ENCODE measurements at regions of chr17 and their contacts with region 1.

Region 1: DNA sequence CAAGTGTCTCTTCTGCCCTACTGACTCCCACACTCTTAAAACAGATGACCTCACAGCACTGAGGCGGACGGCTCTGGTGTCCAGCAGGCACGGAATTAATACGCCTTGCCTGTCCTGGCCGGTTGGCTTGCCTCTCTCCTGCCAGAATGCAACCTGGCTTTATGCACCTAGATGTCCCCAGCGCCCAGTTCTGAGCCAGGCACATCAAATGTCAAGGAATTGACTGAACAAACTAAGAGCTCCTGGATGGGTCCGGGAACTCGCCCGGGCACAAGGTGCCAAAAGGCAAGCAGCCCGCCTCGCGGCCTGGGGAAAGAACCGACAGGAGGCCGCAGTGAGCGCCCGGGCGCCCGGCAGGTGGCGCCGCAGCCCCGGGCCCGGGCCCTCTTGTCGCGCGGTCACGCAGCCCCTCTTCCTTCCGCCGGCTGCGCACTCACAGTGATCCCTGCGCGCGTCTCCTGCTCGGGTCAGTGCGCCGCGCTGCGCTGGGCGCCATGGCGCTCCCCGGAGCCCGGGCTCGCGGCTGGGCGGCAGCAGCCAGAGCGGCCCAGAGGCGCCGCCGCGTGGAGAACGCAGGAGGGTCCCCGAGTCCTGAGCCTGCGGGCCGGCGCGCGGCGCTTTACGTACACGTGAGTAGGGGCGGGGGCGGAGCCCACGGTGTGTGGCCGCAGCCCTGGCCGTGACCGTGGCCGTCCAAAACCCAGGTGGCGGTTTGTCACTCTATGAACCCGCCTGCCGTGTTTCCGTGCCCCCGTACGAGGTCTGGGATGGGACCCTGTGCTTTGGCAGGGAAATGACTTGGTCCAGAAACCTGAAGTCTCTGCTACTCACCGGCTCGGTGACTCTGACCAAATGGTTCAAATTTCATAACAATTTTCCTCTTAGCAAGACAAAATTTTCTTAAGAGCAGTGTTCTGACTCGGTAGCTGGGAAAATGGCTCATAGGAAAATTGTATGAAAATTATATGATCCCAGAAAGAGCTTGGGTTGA is at the start of gene RSAD1:
- DNase-seq: peak; percentile 95
- ATAC-seq: peak; percentile 93
- total RNA-seq, gene RSAD1: 52.7 TPM

Region 2: GRCh38 chr17:50361561-50362480 is 116.9 kb before region 1 on chr17:
- intact Hi-C with region 1: loop called (anchors 5 kb)
- DNase-seq: no peak
- ATAC-seq: peak; percentile 62

Region 3: GRCh38 chr17:50425682-50426471 is 52.8 kb before region 1 on chr17 and contains the start of gene ACSF2:
- intact Hi-C with region 1: loop called (anchors 2 kb)
- DNase-seq: peak; percentile 88
- ATAC-seq: peak; percentile 93
- total RNA-seq, gene ACSF2: 22.7 TPM

Region 4: DNA sequence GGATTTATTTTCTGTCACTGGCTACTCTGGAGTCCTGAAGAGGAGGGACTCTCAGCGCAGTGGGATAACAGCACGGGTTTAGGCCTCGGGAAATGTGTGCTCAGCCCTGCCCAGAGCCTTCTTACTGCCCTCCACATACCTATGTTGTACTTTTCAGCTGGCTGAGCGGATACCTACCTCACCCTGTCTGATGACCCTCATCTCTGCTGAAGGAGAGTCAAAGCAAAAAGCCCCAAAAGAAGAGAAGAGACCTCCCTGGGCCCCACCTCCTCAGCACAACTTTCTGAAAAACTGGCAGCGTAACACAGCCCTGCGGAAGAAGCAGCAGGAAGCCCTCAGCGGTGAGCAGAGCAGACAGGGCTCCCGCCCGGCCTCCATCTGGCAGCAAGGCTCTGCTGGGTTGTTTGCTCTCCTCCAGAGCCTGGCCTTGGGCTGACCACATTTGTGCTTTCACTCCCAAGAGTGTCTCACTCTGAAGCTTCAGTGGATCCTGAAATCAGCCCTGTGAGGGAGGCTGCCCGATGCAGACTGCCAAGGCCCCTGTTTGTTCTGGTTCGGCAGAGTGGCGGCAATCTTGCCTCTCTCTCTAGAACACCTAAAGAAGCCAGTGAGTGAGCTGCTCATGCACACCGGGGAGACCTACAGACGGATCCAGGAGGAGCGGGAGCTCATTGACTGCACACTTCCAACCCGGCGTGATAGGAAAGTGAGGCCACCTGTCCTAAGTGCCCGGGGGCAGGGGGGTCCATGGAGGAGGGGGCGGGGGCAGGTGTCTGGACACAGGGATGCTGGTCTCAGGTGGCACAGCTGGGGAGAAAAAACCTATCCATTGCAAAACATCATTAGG is 39.9 kb after region 1 on chr17:
- intact Hi-C with region 1: no loop called
- DNase-seq: no peak
- ATAC-seq: no peak

Region 5: DNA sequence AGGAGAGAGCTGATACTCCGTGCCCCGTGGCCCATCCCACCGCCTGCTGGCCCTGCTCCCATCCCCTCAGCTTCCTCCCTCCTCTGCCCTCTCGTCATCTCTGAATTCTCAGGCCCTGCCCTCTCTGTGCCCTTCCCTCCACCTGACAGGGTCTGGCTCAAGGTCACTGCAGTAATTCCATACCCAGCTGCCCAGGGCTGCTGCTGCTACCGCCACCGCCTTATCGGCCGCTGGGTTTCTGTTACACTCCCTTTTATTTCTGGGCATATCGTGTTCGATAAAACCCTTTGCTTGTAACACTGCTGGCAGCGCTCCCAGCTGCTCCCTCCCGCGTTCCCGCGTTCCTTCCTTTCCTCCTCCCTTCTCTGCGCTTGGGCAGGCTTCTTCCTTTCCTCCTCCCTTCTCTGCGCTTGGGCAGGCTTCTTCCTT is 55.0 kb after region 1 on chr17:
- intact Hi-C with region 1: loop called (anchors 2 kb)
- DNase-seq: peak; percentile 85
- ATAC-seq: peak; percentile 82

Region 6: DNA sequence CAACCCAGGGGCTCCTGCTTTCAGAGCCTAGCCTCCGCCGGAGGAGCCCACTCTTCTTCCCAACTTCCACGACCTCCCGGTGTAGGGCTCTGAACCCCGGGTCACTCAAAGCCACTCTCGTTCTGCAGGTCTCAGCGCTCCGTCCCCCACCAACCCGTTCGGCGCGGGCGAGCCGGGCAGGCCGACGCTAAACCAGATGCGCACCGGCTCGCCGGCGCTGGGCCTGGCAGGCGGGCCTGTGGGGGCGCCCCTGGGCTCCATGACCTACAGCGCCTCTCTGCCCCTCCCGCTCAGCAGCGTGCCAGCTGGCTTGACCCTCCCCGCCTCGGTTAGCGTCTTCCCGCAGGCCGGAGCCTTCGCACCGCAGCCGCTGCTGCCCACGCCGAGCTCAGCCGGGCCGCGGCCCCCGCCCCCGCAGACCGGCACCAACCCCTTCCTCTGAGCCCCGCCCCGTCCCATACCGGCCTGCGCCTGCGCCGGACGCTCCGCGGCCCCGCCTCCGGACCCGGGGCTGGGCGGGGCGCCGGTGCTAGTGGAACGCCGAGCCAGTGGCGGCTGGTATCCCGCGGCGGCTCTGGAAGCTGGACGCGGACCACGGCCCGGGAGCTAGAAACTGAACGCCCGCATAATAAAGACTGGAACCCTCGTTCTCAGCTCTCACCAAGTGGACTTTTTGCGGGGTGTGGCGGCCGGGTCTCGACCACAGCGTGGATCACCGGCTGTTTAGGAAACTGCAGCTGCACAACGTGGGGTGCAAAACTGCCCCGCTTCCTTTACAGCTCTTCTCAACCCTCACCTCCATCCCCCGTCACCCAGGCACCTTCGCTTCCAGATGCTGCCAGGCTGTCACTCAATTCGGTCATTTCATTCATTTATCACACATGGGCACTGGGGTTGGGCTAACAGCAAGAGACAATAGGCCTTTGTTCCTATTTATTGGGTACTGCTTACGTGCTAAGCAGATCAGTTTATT is 63.3 kb after region 1 on chr17:
- intact Hi-C with region 1: loop called (anchors 2 kb)
- DNase-seq: peak; percentile 94
- ATAC-seq: peak; percentile 93

Region 7: DNA sequence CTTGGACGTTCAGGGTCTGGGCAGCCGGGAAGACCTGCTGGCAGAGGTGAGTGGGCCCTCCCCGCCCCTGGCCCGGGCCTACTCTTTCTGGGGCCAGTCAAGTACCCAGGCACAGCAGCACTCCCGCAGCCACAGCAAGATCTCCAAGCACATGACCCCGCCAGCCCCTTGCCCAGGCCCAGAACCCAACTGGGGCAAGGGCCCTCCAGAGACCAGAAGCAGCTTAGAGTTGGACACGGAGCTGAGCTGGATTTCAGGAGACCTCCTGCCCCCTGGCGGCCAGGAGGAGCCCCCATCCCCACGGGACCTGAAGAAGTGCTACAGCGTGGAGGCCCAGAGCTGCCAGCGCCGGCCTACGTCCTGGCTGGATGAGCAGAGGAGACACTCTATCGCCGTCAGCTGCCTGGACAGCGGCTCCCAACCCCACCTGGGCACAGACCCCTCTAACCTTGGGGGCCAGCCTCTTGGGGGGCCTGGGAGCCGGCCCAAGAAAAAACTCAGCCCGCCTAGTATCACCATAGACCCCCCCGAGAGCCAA is 147.4 kb after region 1 on chr17:
- intact Hi-C with region 1: loop called (anchors 1 kb)
- DNase-seq: peak; percentile 84
- ATAC-seq: peak; percentile 80

Region 8: DNA sequence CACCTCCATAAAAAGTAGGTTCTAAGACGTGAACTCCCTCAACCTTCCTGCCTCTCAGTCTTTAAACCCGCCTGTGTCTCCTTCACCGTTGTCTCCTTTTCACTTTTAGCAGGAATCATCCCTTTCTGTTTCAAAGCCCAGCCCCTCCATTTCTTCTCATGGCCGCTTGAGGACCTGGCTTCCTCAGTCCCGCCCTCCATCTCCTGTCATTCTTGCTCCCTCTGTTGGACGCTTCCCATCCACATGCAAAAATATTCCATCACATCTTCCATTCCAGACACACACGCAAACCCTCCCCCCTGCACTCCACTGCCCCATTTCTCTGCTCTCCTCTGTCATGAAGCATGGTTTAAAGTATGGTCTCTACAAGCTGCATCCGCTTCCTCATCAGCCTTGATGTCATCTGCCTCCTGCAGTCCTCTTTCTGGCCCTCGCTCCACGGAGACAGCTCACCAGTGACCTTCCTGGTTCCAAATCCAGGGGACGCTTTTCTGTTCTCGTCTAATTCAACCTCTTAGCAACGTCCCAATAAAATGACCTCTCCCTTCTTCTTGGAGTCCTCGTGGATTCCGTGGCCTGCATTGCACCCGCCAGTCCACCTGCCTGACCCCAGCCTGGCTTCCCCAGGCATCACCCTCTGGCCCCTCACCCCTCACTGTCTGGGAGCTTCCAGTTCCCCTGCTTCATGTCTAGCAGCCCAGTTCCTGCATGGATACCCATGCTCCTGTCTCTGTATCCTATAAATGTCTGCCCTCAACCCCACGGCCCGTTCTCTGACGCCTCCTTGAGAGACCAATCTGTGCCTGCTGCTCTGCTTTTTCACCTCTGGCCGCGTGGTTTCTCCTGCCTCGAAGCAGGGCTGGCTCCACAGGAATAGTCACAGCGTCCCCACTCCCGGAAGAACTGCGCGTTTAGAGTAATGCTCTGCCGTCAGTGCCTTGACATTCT is 202.9 kb after region 1 on chr17:
- intact Hi-C with region 1: loop called (anchors 10 kb)
- DNase-seq: peak; percentile 61
- ATAC-seq: peak; percentile 48

Measured in Right ventricle myocardium inferior (tissue), 1 donor.